Activated T-helper 1 cell treated with anti-CD3 and anti-CD28 coated beads, Interleukin-12 subunit alpha, Interleukin-12 subunit beta, Interleukin-2, Interleukin-4 antibody, amounts not matched to agents 30 ng/mL and 10 ng/mL and 1 ng/mL, durations not matched to agents 14 hours and 24 hours and 36 hours (primary cell): ENCODE measurements at regions of chrX and their contacts with region 1.

Region 1: GRCh38 chrX:53441531-53442321 is 7.6 kb upstream of the HSD17B10 start:
- DNase-seq: peak; percentile 74
- H3K4me3 Mint-ChIP-seq: peak overlapping the region; percentile 80
- H3K27ac Mint-ChIP-seq: peak overlapping the region; percentile 72
- H3K4me1 Mint-ChIP-seq: peaks cover 20% of the 10 kb centered on the region
- H3K27me3 Mint-ChIP-seq: peaks cover 2% of the 10 kb centered on the region

Region 2: DNA sequence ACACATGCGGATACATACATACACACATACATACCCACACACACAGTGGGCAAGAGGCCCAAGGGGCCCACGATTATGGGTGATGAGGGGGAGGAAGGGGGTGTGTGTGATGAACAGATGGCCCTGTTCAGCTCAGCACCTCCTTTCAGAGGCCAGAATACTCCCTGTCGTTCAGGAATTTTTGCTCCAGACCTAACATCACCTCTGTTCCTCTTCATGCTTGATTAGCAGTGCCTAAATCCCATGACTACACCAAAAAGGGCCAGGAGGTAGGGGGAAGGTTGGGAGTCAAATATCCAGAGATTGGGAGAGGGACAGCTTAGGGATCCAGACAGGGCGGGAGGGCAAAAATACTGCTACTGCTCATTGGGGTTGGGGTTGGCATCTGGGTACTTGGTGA is 62.0 kb before region 1 on chrX:
- intact Hi-C with region 1: loop called (anchors 2 kb)
- DNase-seq: no peak
- H3K4me3 Mint-ChIP-seq: no peak overlapping the region
- H3K27ac Mint-ChIP-seq: no peak overlapping the region
- H3K4me1 Mint-ChIP-seq: no peaks in the 10 kb centered on the region
- H3K27me3 Mint-ChIP-seq: no peaks in the 10 kb centered on the region

Region 3: GRCh38 chrX:53481816-53482465 is 40.2 kb after region 1 on chrX:
- intact Hi-C with region 1: loop called (anchors 1 kb)
- DNase-seq: peak; percentile 20
- H3K4me3 Mint-ChIP-seq: no peak overlapping the region
- H3K27ac Mint-ChIP-seq: no peak overlapping the region
- H3K4me1 Mint-ChIP-seq: no peaks in the 10 kb centered on the region
- H3K27me3 Mint-ChIP-seq: peaks cover 9% of the 10 kb centered on the region